Mammary epithelial cell (primary cell): ENCODE measurements at regions of chr12 and their contacts with region 1.

Region 1: DNA sequence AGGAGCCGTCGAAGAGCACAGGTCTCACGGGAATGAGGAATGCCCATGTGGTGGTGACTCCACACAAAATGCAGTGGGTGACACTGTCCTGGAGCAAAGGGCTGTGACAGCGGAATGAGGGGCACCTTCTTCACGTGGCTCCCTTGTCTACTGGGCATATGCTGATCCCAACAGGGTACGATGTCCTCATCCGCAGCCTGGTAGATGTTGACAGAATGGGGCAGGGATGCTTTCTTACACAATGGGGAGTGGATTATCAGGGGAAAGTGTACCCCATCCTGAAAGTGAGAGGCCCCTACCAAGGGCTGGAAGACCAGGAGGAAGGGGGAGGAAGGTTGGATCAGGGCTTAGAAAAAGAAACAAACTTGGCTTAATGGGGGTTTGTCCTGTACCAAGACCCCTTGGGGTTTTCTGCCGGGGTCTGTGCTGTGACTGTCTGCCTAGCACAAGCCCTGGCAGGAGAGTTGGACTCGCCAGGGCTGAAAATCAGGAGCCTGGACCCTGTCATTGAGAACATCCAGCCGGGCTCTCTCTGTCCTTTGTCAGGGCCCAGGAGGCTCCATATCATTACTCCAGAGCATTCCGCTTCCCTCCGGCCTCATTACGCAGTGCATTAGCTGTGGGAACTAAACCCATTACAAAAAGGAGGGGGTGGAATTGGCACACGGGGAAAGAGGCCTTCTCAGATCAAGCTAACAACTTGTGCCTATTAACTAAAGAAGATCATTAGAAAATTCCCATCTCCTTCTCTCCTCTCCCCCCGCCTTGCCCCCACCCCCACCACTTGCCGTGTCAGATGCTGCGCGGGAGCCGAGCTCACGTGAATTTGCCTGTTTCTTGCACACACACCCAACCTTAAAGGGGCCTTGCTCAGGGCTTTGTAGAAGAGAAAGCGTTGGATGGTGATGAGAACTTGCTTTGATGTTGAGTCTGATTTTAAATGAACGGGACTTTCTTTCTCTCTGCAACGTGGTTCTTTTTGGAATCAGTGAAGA is 171.8 kb upstream of the PARP11 start:
- DNase-seq: no peak
- H3K4me3 ChIP-seq: no peak overlapping the region
- H3K27ac ChIP-seq: no peak overlapping the region
- H3K4me1 ChIP-seq: no peaks in the 10 kb centered on the region
- H3K27me3 ChIP-seq: no peaks in the 10 kb centered on the region
- CTCF ChIP-seq: no peak

Region 2: GRCh38 chr12:3698218-3698974 is 346.6 kb before region 1 on chr12:
- CTCF ChIA-PET with region 1: no interaction called
- dilution Hi-C with region 1: no loop called
- in situ Hi-C with region 1: no loop called
- intact Hi-C with region 1: no loop called
- DNase-seq: peak; percentile 84
- H3K4me3 ChIP-seq: no peak overlapping the region
- H3K27ac ChIP-seq: peak overlapping the region; percentile 60
- H3K4me1 ChIP-seq: peaks cover 19% of the 10 kb centered on the region
- H3K27me3 ChIP-seq: no peaks in the 10 kb centered on the region
- CTCF ChIP-seq: no peak

Region 3: DNA sequence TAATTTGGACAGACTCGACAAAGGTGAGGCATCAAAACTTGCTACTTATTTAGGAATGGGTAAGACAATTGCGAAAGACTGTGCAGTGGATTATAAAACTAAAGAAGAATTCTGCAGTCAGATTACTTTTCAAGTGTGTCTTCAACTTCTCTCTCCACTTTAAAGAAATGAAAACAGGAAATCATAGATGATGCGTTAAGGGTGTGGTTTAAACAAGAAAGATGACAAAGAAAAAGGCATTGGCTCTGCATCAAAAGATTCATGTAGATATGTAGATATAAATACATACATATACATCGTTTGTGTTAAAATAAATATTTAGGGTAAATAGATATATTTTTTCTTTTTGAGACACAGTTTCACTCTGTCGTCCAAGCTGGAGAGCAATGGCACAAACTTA is 97.3 kb before region 1 on chr12:
- CTCF ChIA-PET with region 1: no interaction called
- dilution Hi-C with region 1: no loop called
- in situ Hi-C with region 1: no loop called
- intact Hi-C with region 1: no loop called
- DNase-seq: no peak
- H3K4me3 ChIP-seq: no peak overlapping the region
- H3K27ac ChIP-seq: no peak overlapping the region
- H3K4me1 ChIP-seq: no peaks in the 10 kb centered on the region
- H3K27me3 ChIP-seq: peaks cover 3% of the 10 kb centered on the region
- CTCF ChIP-seq: no peak

Region 4: GRCh38 chr12:3964439-3964838 is 80.6 kb before region 1 on chr12:
- CTCF ChIA-PET with region 1: no interaction called
- dilution Hi-C with region 1: loop called (anchors 5 kb)
- in situ Hi-C with region 1: no loop called
- intact Hi-C with region 1: no loop called
- DNase-seq: no peak
- H3K4me3 ChIP-seq: no peak overlapping the region
- H3K27ac ChIP-seq: no peak overlapping the region
- H3K4me1 ChIP-seq: no peaks in the 10 kb centered on the region
- H3K27me3 ChIP-seq: no peaks in the 10 kb centered on the region
- CTCF ChIP-seq: peak in 1 of 2 donors; percentile 11

Region 5: DNA sequence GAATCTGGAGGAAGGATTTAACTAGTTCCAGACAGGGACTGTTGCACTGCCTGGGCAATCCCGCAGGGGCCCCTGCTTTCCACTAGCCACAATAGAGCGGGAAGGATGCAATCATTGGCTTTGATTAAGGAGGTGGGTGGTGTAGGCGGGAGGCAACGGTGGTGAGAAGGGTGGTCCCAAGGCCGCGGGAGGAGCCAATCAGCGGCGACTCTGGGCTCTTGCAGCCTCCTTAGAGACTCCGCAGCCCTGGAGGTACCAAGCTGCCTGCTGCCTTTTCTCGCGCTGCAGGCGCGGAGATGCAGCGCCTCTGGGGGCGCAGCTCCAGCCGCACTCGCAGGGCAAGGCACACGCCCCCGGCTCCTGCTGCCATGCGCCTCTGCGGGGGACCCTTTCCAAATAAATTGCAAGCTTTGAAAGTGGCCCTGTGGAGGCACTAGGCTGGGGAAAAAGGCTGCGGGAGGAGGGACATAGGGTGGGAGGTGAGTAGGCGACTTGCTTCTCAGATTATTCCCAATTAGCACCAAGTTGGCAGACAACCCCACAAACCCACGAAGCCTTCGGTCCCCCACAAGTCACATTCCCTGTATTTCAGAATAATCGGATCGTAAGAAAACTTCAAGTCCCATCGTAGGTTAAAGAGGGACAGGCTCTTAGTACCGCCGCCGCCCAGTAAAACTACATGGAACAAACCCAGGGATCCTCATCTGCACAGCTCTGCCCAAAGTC is 863.8 kb after region 1 on chr12:
- CTCF ChIA-PET with region 1: no interaction called
- dilution Hi-C with region 1: no loop called
- in situ Hi-C with region 1: no loop called
- intact Hi-C with region 1: no loop called
- DNase-seq: no peak
- H3K4me3 ChIP-seq: no peak overlapping the region
- H3K27ac ChIP-seq: no peak overlapping the region
- H3K4me1 ChIP-seq: peaks cover 6% of the 10 kb centered on the region
- H3K27me3 ChIP-seq: peaks cover 46% of the 10 kb centered on the region
- CTCF ChIP-seq: no peak